ENCODE measurements at regions of chr1 and their contacts with region 1.

Region 1: GRCh38 chr1:58546520-58547308 is at the start of gene OMA1:
- DNase-seq: peak; percentile 95 to 99 (median 98)
- ATAC-seq: peak; percentile 92
- H3K4me3 ChIP-seq: peak within 1 kb of the TSS; percentile 63 to 77
- H3K4me3 Mint-ChIP-seq: peak within 1 kb of the TSS; percentile 97
- H3K27ac ChIP-seq: peak within 1 kb of the TSS; percentile 95 to 97
- H3K27ac Mint-ChIP-seq: peak within 1 kb of the TSS; percentile 99
- H3K4me1 ChIP-seq: peaks cover 12% of the 10 kb centered on the region
- H3K4me1 Mint-ChIP-seq: peaks cover 32% of the 10 kb centered on the region
- H3K27me3 ChIP-seq: no peaks in the 10 kb centered on the region
- H3K27me3 Mint-ChIP-seq: no peaks in the 10 kb centered on the region
- CTCF ChIP-seq: peak; percentile 97
- total RNA-seq, gene OMA1: 25.1 to 31.2 TPM

Region 2: GRCh38 chr1:58652651-58653184 is 106.0 kb after region 1 on chr1:
- CTCF ChIA-PET with region 1: interaction called, 8 read pairs
- POLR2A ChIA-PET with region 1: interaction called, 3 read pairs
- intact Hi-C with region 1: loop called (anchors 1 to 2 kb)
- DNase-seq: peak; percentile 11 to 83 (median 53)
- ATAC-seq: peak; percentile 90
- H3K4me3 ChIP-seq: no peak overlapping the region
- H3K4me3 Mint-ChIP-seq: no peak overlapping the region
- H3K27ac ChIP-seq: no peak overlapping the region
- H3K27ac Mint-ChIP-seq: no peak overlapping the region
- H3K4me1 ChIP-seq: peaks cover 14% of the 10 kb centered on the region
- H3K4me1 Mint-ChIP-seq: peaks cover 23% of the 10 kb centered on the region
- H3K27me3 ChIP-seq: no peaks in the 10 kb centered on the region
- H3K27me3 Mint-ChIP-seq: no peaks in the 10 kb centered on the region
- CTCF ChIP-seq: peak; percentile 84

Region 3: GRCh38 chr1:58699011-58699762 is 152.5 kb after region 1 on chr1:
- CTCF ChIA-PET with region 1: no interaction called
- POLR2A ChIA-PET with region 1: no interaction called
- intact Hi-C with region 1: loop called (anchors 1 kb)
- DNase-seq: peak in 1 of 9 experiments; percentile 51
- ATAC-seq: no peak
- H3K4me3 ChIP-seq: peak overlapping the region; percentile 86 to 100
- H3K4me3 Mint-ChIP-seq: peak overlapping the region; percentile 99
- H3K27ac ChIP-seq: peak overlapping the region; percentile 84 to 93
- H3K27ac Mint-ChIP-seq: peak overlapping the region; percentile 98
- H3K4me1 ChIP-seq: peaks cover 28% of the 10 kb centered on the region
- H3K4me1 Mint-ChIP-seq: peaks cover 25% of the 10 kb centered on the region
- H3K27me3 ChIP-seq: no peaks in the 10 kb centered on the region
- H3K27me3 Mint-ChIP-seq: no peaks in the 10 kb centered on the region
- CTCF ChIP-seq: no peak